CD8-positive, alpha-beta memory T cell (primary cell): ENCODE measurements at regions of chr12 and their contacts with region 1.

Region 1: GRCh38 chr12:92034858-92035401 is 110.7 kb downstream of the BTG1 start:
- DNase-seq: peak; percentile 11 to 75 (median 57)
- H3K4me3 ChIP-seq: peak overlapping the region; percentile 44
- H3K4me3 Mint-ChIP-seq: peak overlapping the region; percentile 89 to 96 (median 91)
- H3K27ac ChIP-seq: peak overlapping the region; percentile 36
- H3K27ac Mint-ChIP-seq: peak overlapping the region; percentile 96 to 100 (median 98)
- H3K4me1 ChIP-seq: peaks cover 78% of the 10 kb centered on the region
- H3K4me1 Mint-ChIP-seq: peaks cover 79 to 99% (median 91%) of the 10 kb centered on the region in 3 donors
- H3K27me3 ChIP-seq: no peaks in the 10 kb centered on the region
- H3K27me3 Mint-ChIP-seq: no peaks in the 10 kb centered on the region

Region 2: GRCh38 chr12:92010853-92011701 is 23.9 kb before region 1 on chr12:
- CTCF ChIA-PET with region 1: interaction called, 12 read pairs
- POLR2A ChIA-PET with region 1: no interaction called
- DNase-seq: no peak
- H3K4me3 ChIP-seq: peak overlapping the region; percentile 11
- H3K4me3 Mint-ChIP-seq: peak overlapping the region in 6 of 7 donors; percentile 18 to 73 (median 66)
- H3K27ac ChIP-seq: no peak overlapping the region
- H3K27ac Mint-ChIP-seq: peak overlapping the region in 7 of 8 donors; percentile 3 to 91 (median 76)
- H3K4me1 ChIP-seq: peaks cover 7% of the 10 kb centered on the region
- H3K4me1 Mint-ChIP-seq: peaks cover 24 to 57% (median 45%) of the 10 kb centered on the region in 3 donors
- H3K27me3 ChIP-seq: no peaks in the 10 kb centered on the region
- H3K27me3 Mint-ChIP-seq: no peaks in the 10 kb centered on the region